Spleen (tissue), 13 donors: ENCODE measurements at regions of chr3 and their contacts with region 1.

Region 1: GRCh38 chr3:141561426-141562034 is 74.7 kb downstream of the RASA2 start:
- DNase-seq: no peak
- H3K4me3 ChIP-seq: no peak overlapping the region
- H3K27ac ChIP-seq: peak overlapping the region in 2 of 8 donors; percentile 34 to 40
- H3K4me1 ChIP-seq: peaks cover 5 to 60% (median 16%) of the 10 kb centered on the region in 6 donors
- H3K27me3 ChIP-seq: no peaks in the 10 kb centered on the region
- CTCF ChIP-seq: peak; percentile 55 to 96 (median 81)
- POLR2A ChIP-seq: no peak

Region 2: GRCh38 chr3:141094790-141095545 is 466.6 kb before region 1 on chr3:
- intact Hi-C with region 1: no loop called
- DNase-seq: no peak
- H3K4me3 ChIP-seq: no peak overlapping the region
- H3K27ac ChIP-seq: no peak overlapping the region
- H3K4me1 ChIP-seq: no peaks in the 10 kb centered on the region
- H3K27me3 ChIP-seq: no peaks in the 10 kb centered on the region
- CTCF ChIP-seq: no peak
- POLR2A ChIP-seq: no peak

Region 3: GRCh38 chr3:141303481-141304223 is 257.9 kb before region 1 on chr3:
- intact Hi-C with region 1: loop called (anchors 10 kb)
- DNase-seq: no peak
- H3K4me3 ChIP-seq: no peak overlapping the region
- H3K27ac ChIP-seq: no peak overlapping the region
- H3K4me1 ChIP-seq: peaks cover 0 to 39% (median 7%) of the 10 kb centered on the region in 6 donors
- H3K27me3 ChIP-seq: no peaks in the 10 kb centered on the region
- CTCF ChIP-seq: peak; percentile 59 to 85 (median 76)
- POLR2A ChIP-seq: no peak

Region 4: DNA sequence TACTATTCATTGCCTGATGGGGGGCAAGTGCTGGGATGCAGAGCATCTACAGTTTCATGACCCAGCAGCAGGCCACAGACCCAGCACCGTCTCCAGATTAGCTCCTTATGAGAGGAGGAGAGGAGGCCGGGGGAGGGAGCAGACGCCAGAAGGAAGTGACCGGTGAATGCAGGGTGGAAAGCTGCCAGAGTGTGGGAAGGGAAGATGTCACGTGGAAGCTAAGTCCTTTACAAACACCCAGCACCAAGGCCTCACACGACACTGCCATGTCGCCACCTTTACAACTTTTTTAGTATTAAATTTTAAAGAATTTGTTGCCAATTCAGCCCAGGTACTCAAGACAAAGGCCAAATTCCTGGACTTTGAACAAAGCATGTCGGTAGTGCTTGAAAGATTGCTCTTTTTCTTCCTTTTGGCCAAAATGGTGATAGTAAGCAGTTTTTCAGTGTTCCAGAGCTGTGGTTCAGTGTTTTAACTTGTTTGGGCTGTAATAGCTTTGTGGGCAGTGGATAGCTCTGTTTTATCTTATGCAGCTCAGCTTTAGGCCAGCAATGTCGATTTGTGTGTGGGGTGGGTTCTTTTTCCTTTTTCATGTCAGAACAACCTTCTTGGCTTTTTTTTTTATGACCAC is 135.0 kb before region 1 on chr3:
- intact Hi-C with region 1: no loop called
- DNase-seq: no peak
- H3K4me3 ChIP-seq: no peak overlapping the region
- H3K27ac ChIP-seq: peak overlapping the region in 6 of 8 donors; percentile 15 to 49 (median 35)
- H3K4me1 ChIP-seq: peaks cover 8 to 80% (median 32%) of the 10 kb centered on the region in 6 donors
- H3K27me3 ChIP-seq: peaks cover 0 to 14% (median 0%) of the 10 kb centered on the region in 7 donors
- CTCF ChIP-seq: no peak
- POLR2A ChIP-seq: no peak

Region 5: DNA sequence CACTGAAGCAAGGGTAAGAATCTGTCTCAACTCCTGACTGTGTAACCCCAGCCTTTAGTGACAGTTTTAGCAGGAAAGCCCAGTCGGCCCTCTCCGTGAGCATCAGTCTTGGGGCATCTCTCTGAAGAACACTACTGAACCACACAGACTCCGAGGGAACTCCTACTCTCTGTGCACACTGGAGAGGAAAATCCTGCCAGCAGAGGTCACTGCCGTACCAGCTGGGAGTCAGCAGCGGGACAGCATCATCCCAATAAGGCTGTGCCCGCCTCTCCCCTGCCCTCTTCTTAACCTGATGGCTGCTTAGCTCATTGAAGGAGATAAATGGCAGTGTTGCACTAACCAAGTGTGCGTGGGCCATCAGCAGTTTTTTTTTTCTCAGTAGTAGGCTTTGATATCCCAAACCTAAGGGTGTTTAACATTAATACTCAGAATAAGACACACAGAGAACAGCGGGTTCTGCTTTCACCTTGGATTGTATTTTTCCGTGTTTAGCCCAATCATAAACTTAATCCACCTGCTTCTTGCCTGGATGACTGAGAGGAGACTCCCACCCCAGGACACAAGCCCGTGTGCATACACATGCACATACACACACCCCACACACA is 101.3 kb before region 1 on chr3:
- intact Hi-C with region 1: loop called (anchors 1 kb)
- DNase-seq: peak; percentile 94
- H3K4me3 ChIP-seq: no peak overlapping the region
- H3K27ac ChIP-seq: no peak overlapping the region
- H3K4me1 ChIP-seq: peaks cover 0 to 13% (median 1%) of the 10 kb centered on the region in 6 donors
- H3K27me3 ChIP-seq: no peaks in the 10 kb centered on the region
- CTCF ChIP-seq: peak; percentile 79 to 91 (median 87)
- POLR2A ChIP-seq: no peak

Region 6: GRCh38 chr3:141471160-141471559 is 90.4 kb before region 1 on chr3:
- intact Hi-C with region 1: loop called (anchors 5 kb)
- DNase-seq: no peak
- H3K4me3 ChIP-seq: no peak overlapping the region
- H3K27ac ChIP-seq: no peak overlapping the region
- H3K4me1 ChIP-seq: peaks cover 0 to 22% (median 9%) of the 10 kb centered on the region in 6 donors
- H3K27me3 ChIP-seq: no peaks in the 10 kb centered on the region
- CTCF ChIP-seq: no peak
- POLR2A ChIP-seq: no peak